Activated CD4-positive, alpha-beta memory T cell treated with anti-CD3 and anti-CD28 coated beads, Interleukin-2, amount 10 ng/mL, durations not matched to agents 7 days and 5 days (primary cell): ENCODE measurements at regions of chr2 and their contacts with region 1.

Region 1: DNA sequence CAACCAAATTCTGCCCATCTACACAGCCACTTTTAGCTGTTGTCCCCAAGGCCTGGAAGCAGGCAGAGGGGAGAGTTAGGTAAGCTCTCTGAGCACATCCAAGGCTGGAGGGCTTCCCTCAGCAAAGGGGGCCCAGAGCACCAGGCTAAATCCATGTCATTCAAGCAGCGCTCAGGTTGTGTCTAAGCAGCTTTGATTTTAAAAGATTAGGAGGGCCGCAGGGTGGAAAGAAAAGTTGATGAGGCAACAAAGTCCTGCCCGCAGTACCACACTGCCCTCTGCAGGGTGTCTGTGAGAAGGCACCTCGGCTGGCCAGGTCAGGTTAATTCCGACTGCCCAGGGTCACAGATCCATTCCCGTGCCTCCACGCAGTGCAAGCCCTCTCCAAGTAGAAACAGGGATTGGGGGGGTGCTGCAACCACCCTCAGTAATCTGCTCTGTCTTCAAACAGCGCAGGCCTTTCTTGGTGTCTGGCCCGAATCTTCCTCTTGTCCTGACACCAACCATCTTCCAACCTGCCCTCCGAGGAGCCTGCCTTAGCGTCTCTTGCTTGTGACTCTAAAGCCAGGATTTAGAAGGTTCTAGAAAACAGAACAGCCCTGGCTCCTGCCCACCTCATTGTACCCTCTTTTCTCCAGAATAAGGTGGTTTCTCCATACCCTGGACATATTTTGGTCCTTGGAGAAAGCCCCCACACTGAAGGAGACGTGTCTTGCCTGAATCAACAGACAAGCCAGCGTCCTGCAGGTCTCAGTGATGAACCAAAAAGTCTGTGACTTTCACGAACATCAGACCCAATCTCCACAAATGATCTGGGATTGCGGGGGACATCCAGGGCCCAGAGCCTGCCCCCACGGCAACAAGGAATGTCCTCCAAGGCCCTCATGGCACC is 289.2 kb downstream of the TNS1 start:
- DNase-seq: peak; percentile 69
- H3K4me3 Mint-ChIP-seq: no peak overlapping the region
- H3K27ac Mint-ChIP-seq: no peak overlapping the region
- H3K4me1 Mint-ChIP-seq: no peaks in the 10 kb centered on the region
- H3K27me3 Mint-ChIP-seq: peaks cover 2% of the 10 kb centered on the region

Region 2: DNA sequence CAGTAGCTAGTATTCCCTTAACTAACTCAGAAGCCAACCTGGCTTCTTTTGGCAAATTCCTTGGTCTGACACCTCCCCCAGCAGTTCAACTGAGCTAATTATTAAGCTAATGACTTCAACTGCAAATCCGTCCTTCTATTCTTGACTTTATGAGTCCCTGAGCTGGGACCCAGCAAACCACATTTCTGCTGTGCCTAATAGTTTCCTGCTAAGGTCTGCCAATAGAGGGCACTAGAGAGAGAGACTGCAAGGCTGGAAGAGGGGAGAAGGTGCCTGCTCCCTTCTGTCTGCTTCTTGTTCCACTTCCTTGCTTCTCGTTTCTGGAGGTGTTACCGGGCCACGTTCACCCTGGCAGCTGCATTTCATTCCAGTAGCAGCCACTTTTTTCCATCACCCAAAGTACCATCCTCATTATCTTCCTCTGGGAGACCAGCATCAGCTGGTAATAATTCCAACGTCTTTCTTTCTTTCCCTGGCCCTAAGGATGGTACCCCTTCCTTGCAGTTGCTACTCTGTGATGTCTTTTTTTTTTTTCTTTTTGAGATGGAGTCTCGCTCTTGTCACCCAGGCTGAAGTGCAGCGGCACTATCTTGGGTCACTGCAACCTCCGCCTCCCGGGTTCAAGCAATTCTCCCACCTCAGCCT is 62.8 kb before region 1 on chr2:
- CTCF ChIA-PET with region 1: interaction called, 18 read pairs
- POLR2A ChIA-PET with region 1: no interaction called
- DNase-seq: peak; percentile 18
- H3K4me3 Mint-ChIP-seq: no peak overlapping the region
- H3K27ac Mint-ChIP-seq: no peak overlapping the region
- H3K4me1 Mint-ChIP-seq: no peaks in the 10 kb centered on the region
- H3K27me3 Mint-ChIP-seq: no peaks in the 10 kb centered on the region

Region 3: GRCh38 chr2:217804786-217805667 is 91.4 kb after region 1 on chr2:
- CTCF ChIA-PET with region 1: no interaction called
- POLR2A ChIA-PET with region 1: no interaction called
- DNase-seq: no peak
- H3K4me3 Mint-ChIP-seq: no peak overlapping the region
- H3K27ac Mint-ChIP-seq: peak overlapping the region; percentile 6
- H3K4me1 Mint-ChIP-seq: no peaks in the 10 kb centered on the region
- H3K27me3 Mint-ChIP-seq: no peaks in the 10 kb centered on the region